A549 (cell line): ENCODE measurements at regions of chr2 and their contacts with region 1.

Region 1: DNA sequence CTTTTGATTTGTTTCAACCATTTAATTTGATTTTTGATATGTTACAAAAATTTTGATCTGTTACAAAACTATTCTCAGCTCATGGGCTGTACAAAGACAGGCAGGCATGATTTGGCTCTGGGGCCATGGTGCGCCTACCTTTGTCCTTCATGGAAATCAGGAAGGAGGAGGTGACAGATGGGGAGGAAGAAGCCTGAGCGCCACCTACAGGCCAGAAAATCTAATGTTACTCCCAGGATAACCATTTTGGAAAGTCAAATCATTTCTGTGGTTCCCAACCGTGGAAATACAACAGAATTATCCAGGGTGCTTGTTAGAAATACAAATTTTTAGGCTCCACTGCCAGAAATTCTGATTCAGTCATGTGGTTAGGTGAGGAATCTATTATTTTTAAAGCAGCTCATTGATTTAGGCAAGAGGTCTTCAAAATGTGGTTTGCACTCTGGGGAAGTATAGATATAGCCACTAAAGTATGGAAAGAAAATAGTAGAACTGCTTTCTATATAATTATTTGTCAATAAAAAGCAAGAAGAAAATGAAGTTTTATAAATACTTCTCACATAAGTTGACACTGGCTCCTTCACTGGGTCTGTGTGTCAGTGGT is 93.9 kb downstream of the EVA1A start:
- DNase-seq: peak; percentile 50 to 58
- ATAC-seq: peak; percentile 44 to 84; a peak in 3 of 6 replicates
- H3K4me3 ChIP-seq: no peak overlapping the region
- H3K27ac ChIP-seq: no peak overlapping the region
- H3K4me1 ChIP-seq: no peaks in the 10 kb centered on the region
- CTCF ChIP-seq: peak; percentile 60
- EP300 ChIP-seq: no peak
- POLR2A ChIP-seq: no peak
- RAD21 ChIP-seq: peak; percentile 51 to 70; a peak in 4 of 5 replicates

Region 2: DNA sequence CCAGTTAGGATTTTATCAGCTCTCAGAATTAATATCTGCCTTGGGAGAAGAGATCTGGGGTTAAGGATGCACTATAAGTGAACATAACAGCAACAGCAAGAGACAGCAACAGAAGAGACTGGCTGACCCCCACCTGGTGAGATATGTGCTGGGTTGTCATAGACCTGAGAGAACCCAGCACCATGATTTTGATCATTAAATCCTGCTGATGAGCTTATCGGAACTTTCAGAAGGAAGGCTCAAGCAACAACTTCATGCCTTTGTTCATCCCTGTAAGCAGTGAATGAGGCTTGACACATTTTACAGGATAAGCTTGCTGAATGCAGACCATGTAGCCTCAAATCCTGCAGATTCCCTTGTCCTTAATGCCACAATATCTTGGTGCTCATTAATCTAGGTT is 408.4 kb before region 1 on chr2:
- CTCF ChIA-PET with region 1: no interaction called
- POLR2A ChIA-PET with region 1: no interaction called
- DNase-seq: no peak
- ATAC-seq: no peak
- H3K4me3 ChIP-seq: no peak overlapping the region
- H3K27ac ChIP-seq: no peak overlapping the region
- H3K4me1 ChIP-seq: no peaks in the 10 kb centered on the region
- CTCF ChIP-seq: no peak
- EP300 ChIP-seq: no peak
- POLR2A ChIP-seq: no peak
- RAD21 ChIP-seq: no peak

Region 3: GRCh38 chr2:75503048-75503607 is 36.3 kb after region 1 on chr2:
- CTCF ChIA-PET with region 1: interaction called, 15 read pairs
- POLR2A ChIA-PET with region 1: no interaction called
- DNase-seq: peak in 1 of 2 experiments; percentile 12
- ATAC-seq: no peak
- H3K4me3 ChIP-seq: no peak overlapping the region
- H3K27ac ChIP-seq: no peak overlapping the region
- H3K4me1 ChIP-seq: no peaks in the 10 kb centered on the region
- CTCF ChIP-seq: no peak
- EP300 ChIP-seq: no peak
- POLR2A ChIP-seq: no peak
- RAD21 ChIP-seq: no peak

Region 4: DNA sequence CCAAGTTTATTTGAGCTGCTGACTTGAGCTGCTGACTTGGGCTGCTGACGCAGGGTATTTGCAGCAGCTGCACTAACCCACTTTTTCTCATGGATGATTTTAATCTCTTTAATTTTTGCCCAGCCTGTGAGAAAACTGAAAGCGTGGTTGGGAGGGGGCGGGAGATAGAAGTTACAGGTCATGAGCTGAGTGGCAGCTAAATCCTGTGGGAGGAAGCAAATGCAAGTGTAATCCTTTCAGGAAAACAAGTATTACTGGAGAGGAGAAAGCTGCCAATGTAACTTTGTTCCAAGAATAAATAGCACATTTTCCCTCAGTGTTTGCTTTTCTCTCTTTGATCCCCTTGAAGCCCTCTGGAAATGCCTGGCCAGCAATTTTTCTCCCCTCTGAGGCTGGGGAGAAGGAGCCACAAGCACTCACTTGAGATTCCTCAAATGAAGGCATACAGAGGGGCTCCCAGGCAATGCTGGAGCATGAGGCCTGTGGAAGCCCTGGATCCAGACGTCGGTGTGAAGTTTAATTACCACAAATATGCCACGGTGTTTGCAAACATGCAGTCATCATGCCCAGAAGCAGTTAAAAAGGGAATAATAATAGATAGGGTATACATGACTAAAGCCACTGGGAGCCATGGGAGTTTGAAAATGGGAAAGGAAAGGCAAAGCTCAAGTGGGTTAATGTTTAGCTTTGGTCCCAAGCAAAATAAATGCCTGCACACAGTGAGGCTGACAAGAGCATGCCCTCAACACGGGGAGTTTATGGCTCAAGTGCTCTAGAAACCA is 104.3 kb after region 1 on chr2:
- CTCF ChIA-PET with region 1: interaction called, 10 read pairs
- POLR2A ChIA-PET with region 1: no interaction called
- DNase-seq: no peak
- ATAC-seq: no peak
- H3K4me3 ChIP-seq: no peak overlapping the region
- H3K27ac ChIP-seq: peak overlapping the region in 1 of 2 experiments; percentile 30; a peak in 1 of 6 replicates
- H3K4me1 ChIP-seq: peaks cover 12% of the 10 kb centered on the region; the same call in 2 of the 3 replicates
- CTCF ChIP-seq: no peak
- EP300 ChIP-seq: no peak
- POLR2A ChIP-seq: no peak
- RAD21 ChIP-seq: no peak

Region 5: GRCh38 chr2:75619956-75620740 is 153.3 kb after region 1 on chr2:
- CTCF ChIA-PET with region 1: interaction called, 66 read pairs
- POLR2A ChIA-PET with region 1: no interaction called
- DNase-seq: no peak
- ATAC-seq: no peak
- H3K4me3 ChIP-seq: no peak overlapping the region
- H3K27ac ChIP-seq: no peak overlapping the region
- H3K4me1 ChIP-seq: no peaks in the 10 kb centered on the region
- CTCF ChIP-seq: no peak
- EP300 ChIP-seq: no peak
- POLR2A ChIP-seq: no peak
- RAD21 ChIP-seq: no peak

Region 6: DNA sequence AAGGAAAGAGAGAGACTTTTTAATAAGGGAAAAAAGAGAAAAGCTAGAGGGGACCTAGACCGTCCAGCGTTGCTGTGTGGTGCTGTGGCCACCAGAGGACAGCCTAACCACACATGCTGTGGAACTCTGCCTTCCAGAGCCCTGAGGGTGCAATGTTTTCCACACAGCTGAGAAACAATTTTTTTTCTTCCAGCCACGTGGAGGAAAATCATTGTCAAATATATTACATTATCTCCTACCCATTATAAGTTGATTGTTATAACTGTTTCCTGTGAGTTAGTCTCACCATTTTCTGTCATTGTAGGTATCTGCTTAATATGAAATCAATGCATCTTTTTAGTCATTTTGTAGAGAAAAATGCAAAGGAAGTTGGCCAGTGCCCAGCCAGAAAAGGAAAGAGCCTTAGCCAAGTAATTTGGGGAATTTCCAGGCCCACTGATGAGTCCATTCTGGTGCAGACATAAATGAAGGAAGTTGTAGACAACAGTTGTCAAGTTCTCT is 173.9 kb after region 1 on chr2:
- CTCF ChIA-PET with region 1: interaction called, 17 read pairs
- POLR2A ChIA-PET with region 1: no interaction called
- DNase-seq: peak; percentile 60 to 62
- ATAC-seq: peak; percentile 92 to 97
- H3K4me3 ChIP-seq: no peak overlapping the region
- H3K27ac ChIP-seq: no peak overlapping the region
- H3K4me1 ChIP-seq: no peaks in the 10 kb centered on the region
- CTCF ChIP-seq: peak; percentile 98
- EP300 ChIP-seq: no peak
- POLR2A ChIP-seq: no peak
- RAD21 ChIP-seq: peak; percentile 88 to 94

Region 7: GRCh38 chr2:75844651-75845050 is 377.8 kb after region 1 on chr2:
- CTCF ChIA-PET with region 1: no interaction called
- POLR2A ChIA-PET with region 1: no interaction called
- DNase-seq: no peak
- ATAC-seq: no peak
- H3K4me3 ChIP-seq: no peak overlapping the region
- H3K27ac ChIP-seq: no peak overlapping the region
- H3K4me1 ChIP-seq: no peaks in the 10 kb centered on the region
- CTCF ChIP-seq: no peak
- EP300 ChIP-seq: no peak
- POLR2A ChIP-seq: no peak
- RAD21 ChIP-seq: no peak